GM12878 (cell line): ENCODE measurements at regions of chr5 and their contacts with region 1.

Region 1: GRCh38 chr5:44862808-44863207 is 54.1 kb downstream of the MRPS30 start:
- DNase-seq: no peak
- ATAC-seq: peak; percentile 68
- H3K4me3 ChIP-seq: no peak overlapping the region
- H3K27ac ChIP-seq: no peak overlapping the region
- H3K4me1 ChIP-seq: no peaks in the 10 kb centered on the region
- H3K27me3 ChIP-seq: no peaks in the 10 kb centered on the region
- CTCF ChIP-seq: peak; percentile 50 to 67 (median 52); a peak in 5 of 6 replicates
- EP300 ChIP-seq: no peak
- POLR2A ChIP-seq: no peak
- RAD21 ChIP-seq: peak; percentile 90

Region 2: GRCh38 chr5:44875661-44876605 is 13.1 kb after region 1 on chr5:
- CTCF ChIA-PET with region 1: interaction called, 6 read pairs
- POLR2A ChIA-PET with region 1: no interaction called
- RAD21 ChIA-PET with region 1: interaction called, 4 read pairs
- SMC1A ChIA-PET with region 1: interaction called, 16 read pairs
- in situ Hi-C with region 1: no loop called
- intact Hi-C with region 1: no loop called
- DNase-seq: peak; percentile 55
- ATAC-seq: peak; percentile 99
- H3K4me3 ChIP-seq: 0 out of 2 replicates have a peak overlapping the region, but pooled peaks have one; percentile 18
- H3K27ac ChIP-seq: peak overlapping the region; percentile 87
- H3K4me1 ChIP-seq: peaks cover 11% of the 10 kb centered on the region
- H3K27me3 ChIP-seq: no peaks in the 10 kb centered on the region
- CTCF ChIP-seq: no peak
- EP300 ChIP-seq: peak in 1 of 2 experiments; percentile 68; a peak in 1 of 4 replicates
- POLR2A ChIP-seq: no peak
- RAD21 ChIP-seq: no peak

Region 3: GRCh38 chr5:44900273-44900954 is 37.6 kb after region 1 on chr5:
- CTCF ChIA-PET with region 1: interaction called, 10 read pairs
- POLR2A ChIA-PET with region 1: no interaction called
- RAD21 ChIA-PET with region 1: interaction called, 6 read pairs
- SMC1A ChIA-PET with region 1: interaction called, 3 read pairs
- in situ Hi-C with region 1: no loop called
- intact Hi-C with region 1: no loop called
- DNase-seq: no peak
- ATAC-seq: peak; percentile 34; the same call in 2 of the 3 replicates
- H3K4me3 ChIP-seq: no peak overlapping the region
- H3K27ac ChIP-seq: peak overlapping the region; percentile 37; the same call in 1 of the 2 replicates
- H3K4me1 ChIP-seq: peaks cover 6% of the 10 kb centered on the region
- H3K27me3 ChIP-seq: no peaks in the 10 kb centered on the region
- CTCF ChIP-seq: no peak
- EP300 ChIP-seq: no peak
- POLR2A ChIP-seq: no peak
- RAD21 ChIP-seq: no peak

Region 4: DNA sequence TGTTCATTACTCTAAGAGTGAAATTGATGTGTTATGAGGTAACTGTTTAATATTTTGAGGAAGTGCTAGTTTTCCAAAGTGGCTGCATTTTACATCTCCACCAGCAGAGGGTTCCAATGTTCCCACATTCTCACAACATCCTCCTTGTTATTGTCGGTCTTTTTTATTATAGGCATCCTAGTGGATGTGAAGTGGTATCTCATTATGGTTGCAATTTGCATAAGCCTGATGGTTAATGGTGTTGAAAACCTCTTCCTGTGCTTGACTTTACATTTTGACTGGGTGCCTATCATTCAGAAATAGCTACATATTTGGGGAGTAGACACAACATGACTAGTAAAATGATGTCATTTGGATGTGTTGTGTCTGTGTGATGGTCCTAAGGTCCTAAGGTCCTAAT is 89.6 kb after region 1 on chr5:
- CTCF ChIA-PET with region 1: interaction called, 10 read pairs
- POLR2A ChIA-PET with region 1: no interaction called
- RAD21 ChIA-PET with region 1: no interaction called
- SMC1A ChIA-PET with region 1: interaction called, 14 read pairs
- in situ Hi-C with region 1: no loop called
- intact Hi-C with region 1: loop called (anchors 5 kb)
- DNase-seq: peak; percentile 5
- ATAC-seq: peak; percentile 86
- H3K4me3 ChIP-seq: no peak overlapping the region
- H3K27ac ChIP-seq: no peak overlapping the region
- H3K4me1 ChIP-seq: no peaks in the 10 kb centered on the region
- H3K27me3 ChIP-seq: no peaks in the 10 kb centered on the region
- CTCF ChIP-seq: peak; percentile 58 to 70 (median 62)
- EP300 ChIP-seq: no peak
- POLR2A ChIP-seq: no peak
- RAD21 ChIP-seq: peak; percentile 59

Region 5: GRCh38 chr5:45038366-45038987 is 175.7 kb after region 1 on chr5:
- CTCF ChIA-PET with region 1: interaction called, 16 read pairs
- POLR2A ChIA-PET with region 1: no interaction called
- RAD21 ChIA-PET with region 1: interaction called, 12 read pairs
- SMC1A ChIA-PET with region 1: interaction called, 11 read pairs
- in situ Hi-C with region 1: no loop called
- intact Hi-C with region 1: loop called (anchors 5 kb)
- DNase-seq: no peak
- ATAC-seq: peak; percentile 88
- H3K4me3 ChIP-seq: no peak overlapping the region
- H3K27ac ChIP-seq: no peak overlapping the region
- H3K4me1 ChIP-seq: no peaks in the 10 kb centered on the region
- H3K27me3 ChIP-seq: no peaks in the 10 kb centered on the region
- CTCF ChIP-seq: peak; percentile 51 to 60 (median 53); a peak in 5 of 6 replicates
- EP300 ChIP-seq: no peak
- POLR2A ChIP-seq: no peak
- RAD21 ChIP-seq: peak; percentile 75

Region 6: DNA sequence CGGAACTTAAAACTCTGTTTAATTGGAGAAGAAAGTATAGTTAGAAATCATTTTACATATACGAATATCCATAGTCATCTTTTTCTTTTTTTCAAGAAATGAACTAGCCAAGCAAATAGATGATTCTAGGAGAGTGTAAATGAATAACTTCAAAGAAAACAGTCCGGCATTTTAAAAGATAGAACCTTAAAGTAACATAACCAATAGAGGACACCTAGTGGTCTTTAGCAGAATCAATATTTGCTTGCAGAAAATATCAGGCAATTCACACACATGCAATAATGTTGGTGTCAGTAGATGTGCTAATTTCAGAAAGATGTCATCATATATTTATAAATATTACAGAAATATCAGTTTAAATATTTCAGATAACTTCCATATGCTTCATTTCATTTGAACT is 776.2 kb after region 1 on chr5:
- CTCF ChIA-PET with region 1: no interaction called
- POLR2A ChIA-PET with region 1: no interaction called
- RAD21 ChIA-PET with region 1: no interaction called
- SMC1A ChIA-PET with region 1: no interaction called
- in situ Hi-C with region 1: no loop called
- intact Hi-C with region 1: loop called (anchors 5 kb)
- DNase-seq: no peak
- ATAC-seq: no peak
- H3K4me3 ChIP-seq: no peak overlapping the region
- H3K27ac ChIP-seq: no peak overlapping the region
- H3K4me1 ChIP-seq: no peaks in the 10 kb centered on the region
- H3K27me3 ChIP-seq: no peaks in the 10 kb centered on the region
- CTCF ChIP-seq: no peak; a peak in 1 of 6 replicates
- EP300 ChIP-seq: no peak
- POLR2A ChIP-seq: no peak
- RAD21 ChIP-seq: no peak

Region 7: GRCh38 chr5:45774528-45774927 is 911.7 kb after region 1 on chr5:
- CTCF ChIA-PET with region 1: interaction called, 11 read pairs
- POLR2A ChIA-PET with region 1: no interaction called
- RAD21 ChIA-PET with region 1: interaction called, 10 read pairs
- SMC1A ChIA-PET with region 1: interaction called, 9 read pairs
- in situ Hi-C with region 1: no loop called
- intact Hi-C with region 1: no loop called
- DNase-seq: no peak
- ATAC-seq: peak; percentile 69
- H3K4me3 ChIP-seq: no peak overlapping the region
- H3K27ac ChIP-seq: no peak overlapping the region
- H3K4me1 ChIP-seq: no peaks in the 10 kb centered on the region
- H3K27me3 ChIP-seq: no peaks in the 10 kb centered on the region
- CTCF ChIP-seq: peak in 2 of 3 experiments; percentile 20 to 21; a peak in 3 of 6 replicates
- EP300 ChIP-seq: no peak
- POLR2A ChIP-seq: no peak
- RAD21 ChIP-seq: peak; percentile 44; the same call in 1 of the 2 replicates